ENCODE measurements at regions of chr1 and their contacts with region 1.

Region 1: GRCh38 chr1:1511533-1512285 is at the start of gene ATAD3A:
- DNase-seq: peak; percentile 84 to 96 (median 94)
- ATAC-seq: peak; percentile 96
- H3K4me3 ChIP-seq: peak within 1 kb of the TSS; percentile 98
- H3K4me3 Mint-ChIP-seq: peak within 1 kb of the TSS; percentile 82 to 94 (median 90)
- H3K27ac ChIP-seq: peak within 1 kb of the TSS; percentile 85
- H3K27ac Mint-ChIP-seq: peak within 1 kb of the TSS; percentile 81 to 96 (median 92)
- H3K4me1 ChIP-seq: peaks cover 4 to 5% of the 10 kb centered on the region in 2 donors
- H3K4me1 Mint-ChIP-seq: peaks cover 6 to 21% (median 14%) of the 10 kb centered on the region in 7 donors
- H3K27me3 ChIP-seq: no peaks in the 10 kb centered on the region
- H3K27me3 Mint-ChIP-seq: no peaks in the 10 kb centered on the region
- total RNA-seq, gene ATAD3A: 21.0 to 41.3 (median 22.9) TPM

Region 2: GRCh38 chr1:1406817-1407635 is 104.7 kb before region 1 on chr1 and contains the start of gene MRPL20:
- CTCF ChIA-PET with region 1: no interaction called
- POLR2A ChIA-PET with region 1: no interaction called
- intact Hi-C with region 1: loop called (anchors 1 to 2 kb)
- DNase-seq: peak; percentile 88 to 96 (median 94)
- ATAC-seq: peak; percentile 97
- H3K4me3 ChIP-seq: peak within 1 kb of the TSS; percentile 89
- H3K4me3 Mint-ChIP-seq: peak within 1 kb of the TSS; percentile 83 to 96 (median 93)
- H3K27ac ChIP-seq: peak within 1 kb of the TSS; percentile 89
- H3K27ac Mint-ChIP-seq: peak within 1 kb of the TSS; percentile 90 to 97 (median 94)
- H3K4me1 ChIP-seq: peaks cover 19 to 20% of the 10 kb centered on the region in 2 donors
- H3K4me1 Mint-ChIP-seq: peaks cover 0 to 59% (median 35%) of the 10 kb centered on the region in 7 donors
- H3K27me3 ChIP-seq: no peaks in the 10 kb centered on the region
- H3K27me3 Mint-ChIP-seq: peaks cover 0 to 1% (median 0%) of the 10 kb centered on the region in 5 donors
- total RNA-seq, gene MRPL20: 91.2 to 135 (median 122) TPM

Region 3: DNA sequence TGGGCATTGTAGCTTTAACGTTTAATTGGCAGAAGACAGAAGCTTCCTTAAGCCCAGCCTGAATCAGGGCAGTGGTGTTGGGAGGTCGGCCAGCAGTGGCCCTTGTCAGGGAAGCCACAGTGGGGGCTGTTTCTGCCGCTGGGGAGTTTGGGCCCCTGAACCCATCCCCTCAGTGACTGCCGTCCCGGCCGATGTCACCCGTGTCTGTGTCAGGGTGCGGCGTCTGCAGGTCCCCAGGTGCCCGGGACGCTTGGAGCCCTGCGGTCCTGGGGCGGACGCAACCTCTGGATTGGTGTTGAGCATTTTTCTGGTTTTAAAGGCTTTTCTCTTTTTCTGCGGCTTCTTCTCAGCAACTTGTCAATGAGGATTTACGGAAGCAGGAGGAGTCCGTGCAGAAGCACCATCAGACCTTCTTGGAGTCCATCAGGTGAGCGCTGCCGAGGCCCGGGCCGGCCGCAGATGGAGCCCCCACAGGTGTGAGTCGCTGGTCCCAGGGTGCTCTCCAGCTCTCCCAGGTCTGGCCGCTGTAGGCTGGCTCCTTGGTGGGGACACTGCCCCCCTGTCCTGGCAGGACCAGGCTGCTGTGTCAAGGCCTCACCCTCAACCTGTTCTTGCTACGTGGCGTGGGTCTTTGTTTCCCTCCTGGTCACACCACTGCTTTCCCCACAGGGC is 59.9 kb before region 1 on chr1:
- CTCF ChIA-PET with region 1: no interaction called
- POLR2A ChIA-PET with region 1: no interaction called
- intact Hi-C with region 1: no loop called
- DNase-seq: no peak
- ATAC-seq: no peak
- H3K4me3 ChIP-seq: no peak overlapping the region
- H3K4me3 Mint-ChIP-seq: no peak overlapping the region
- H3K27ac ChIP-seq: no peak overlapping the region
- H3K27ac Mint-ChIP-seq: no peak overlapping the region
- H3K4me1 ChIP-seq: no peaks in the 10 kb centered on the region
- H3K4me1 Mint-ChIP-seq: no peaks in the 10 kb centered on the region
- H3K27me3 ChIP-seq: no peaks in the 10 kb centered on the region
- H3K27me3 Mint-ChIP-seq: peaks cover 0 to 6% (median 0%) of the 10 kb centered on the region in 5 donors

Region 4: DNA sequence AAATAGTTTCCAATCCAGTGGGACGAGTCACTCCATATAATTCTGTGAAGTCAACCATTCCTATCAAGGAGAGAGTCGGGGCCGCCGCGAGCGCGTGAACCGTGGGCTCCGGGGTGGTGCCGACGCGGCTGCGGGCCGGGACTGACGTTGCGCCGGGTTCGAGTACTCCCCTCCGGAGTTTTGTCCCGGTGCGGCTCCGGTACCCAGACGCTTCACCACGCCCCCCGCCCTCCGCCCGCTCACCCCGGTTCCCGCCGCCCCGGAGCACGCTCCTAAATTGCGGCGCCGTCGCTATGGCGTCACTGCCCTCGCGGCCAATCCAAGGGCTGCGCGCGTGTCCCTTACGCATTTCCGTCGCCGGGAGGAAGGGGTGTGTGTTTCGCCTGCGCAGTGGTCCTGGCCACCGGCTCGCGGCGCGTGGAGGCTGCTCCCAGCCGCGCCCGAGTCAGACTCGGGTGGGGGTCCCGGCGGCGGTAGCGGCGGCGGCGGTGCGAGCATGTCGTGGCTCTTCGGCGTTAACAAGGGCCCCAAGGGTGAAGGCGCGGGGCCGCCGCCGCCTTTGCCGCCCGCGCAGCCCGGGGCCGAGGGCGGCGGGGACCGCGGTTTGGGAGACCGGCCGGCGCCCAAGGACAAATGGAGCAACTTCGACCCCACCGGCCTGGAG is 40.2 kb before region 1 on chr1 and contains the start of gene ATAD3B:
- CTCF ChIA-PET with region 1: no interaction called
- POLR2A ChIA-PET with region 1: no interaction called
- intact Hi-C with region 1: loop called (anchors 1 to 2 kb)
- DNase-seq: peak; percentile 80 to 95 (median 88)
- ATAC-seq: peak; percentile 98
- H3K4me3 ChIP-seq: peak within 1 kb of the TSS; percentile 68
- H3K4me3 Mint-ChIP-seq: peak within 1 kb of the TSS; percentile 78 to 97 (median 89)
- H3K27ac ChIP-seq: peak within 1 kb of the TSS; percentile 90
- H3K27ac Mint-ChIP-seq: peak within 1 kb of the TSS; percentile 77 to 98 (median 92)
- H3K4me1 ChIP-seq: peaks cover 9 to 14% of the 10 kb centered on the region in 2 donors
- H3K4me1 Mint-ChIP-seq: peaks cover 6 to 39% (median 25%) of the 10 kb centered on the region in 7 donors
- H3K27me3 ChIP-seq: no peaks in the 10 kb centered on the region
- H3K27me3 Mint-ChIP-seq: no peaks in the 10 kb centered on the region
- total RNA-seq, gene ATAD3B: 42.5 to 53.8 (median 51.7) TPM

Region 5: DNA sequence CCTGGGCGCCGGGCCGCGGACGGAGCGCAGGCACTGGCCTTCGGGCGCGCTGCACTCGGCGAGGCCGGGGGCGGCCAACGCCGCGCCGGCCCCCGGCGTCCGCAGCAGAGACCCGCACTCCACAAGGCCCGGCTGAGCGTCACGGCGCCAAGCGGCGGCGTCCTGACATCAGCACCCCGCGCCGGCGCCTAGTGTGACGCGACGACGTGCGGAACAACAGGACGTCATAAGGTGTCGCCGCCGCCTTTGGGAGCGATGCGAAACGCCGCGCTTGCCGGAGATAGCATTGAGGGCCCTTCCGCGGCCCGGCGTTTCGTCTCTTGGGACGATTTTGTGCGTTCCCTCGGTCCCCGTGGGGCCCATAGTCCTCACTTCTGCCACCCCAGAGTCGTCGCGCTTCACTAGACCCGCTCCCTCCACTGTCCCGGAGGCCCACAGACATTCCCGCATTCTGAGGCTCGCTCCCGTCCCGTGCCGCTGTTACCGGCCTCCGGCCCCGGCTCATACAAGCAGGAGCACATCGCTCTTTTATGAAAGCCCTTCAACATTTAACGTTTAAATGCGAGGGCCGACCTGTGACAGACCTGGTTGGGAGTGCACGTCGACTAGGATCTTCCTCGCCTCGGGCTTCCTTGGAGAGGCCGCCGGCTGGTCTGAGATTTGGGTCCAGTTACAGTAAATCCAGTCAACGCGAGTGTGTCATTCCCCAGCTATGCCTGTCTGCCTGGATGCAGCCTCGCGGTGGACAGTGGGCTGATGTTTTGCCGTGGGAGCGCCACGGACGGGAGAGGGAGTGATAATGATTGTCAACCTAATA is 63.2 kb after region 1 on chr1 and contains the start of gene SSU72:
- CTCF ChIA-PET with region 1: no interaction called
- POLR2A ChIA-PET with region 1: no interaction called
- intact Hi-C with region 1: loop called (anchors 1 to 2 kb)
- DNase-seq: peak; percentile 90 to 97 (median 93)
- ATAC-seq: peak; percentile 94
- H3K4me3 ChIP-seq: peak within 1 kb of the TSS; percentile 93
- H3K4me3 Mint-ChIP-seq: peak within 1 kb of the TSS; percentile 97 to 99 (median 98)
- H3K27ac ChIP-seq: peak within 1 kb of the TSS; percentile 98
- H3K27ac Mint-ChIP-seq: peak within 1 kb of the TSS; percentile 98 to 100 (median 99)
- H3K4me1 ChIP-seq: peaks cover 22 to 26% of the 10 kb centered on the region in 2 donors
- H3K4me1 Mint-ChIP-seq: peaks cover 21 to 42% (median 31%) of the 10 kb centered on the region in 7 donors
- H3K27me3 ChIP-seq: no peaks in the 10 kb centered on the region
- H3K27me3 Mint-ChIP-seq: peaks cover 0 to 2% (median 0%) of the 10 kb centered on the region in 5 donors
- total RNA-seq, gene SSU72: 121 to 148 (median 137) TPM

Region 6: GRCh38 chr1:1630271-1630964 is 118.7 kb after region 1 on chr1:
- CTCF ChIA-PET with region 1: no interaction called
- POLR2A ChIA-PET with region 1: no interaction called
- intact Hi-C with region 1: loop called in 1 of 2 experiments (anchors 2 kb)
- DNase-seq: peak; percentile 90 to 97 (median 96)
- ATAC-seq: peak; percentile 76
- H3K4me3 ChIP-seq: peak overlapping the region; percentile 17
- H3K4me3 Mint-ChIP-seq: peak overlapping the region; percentile 85 to 95 (median 90)
- H3K27ac ChIP-seq: peak overlapping the region; percentile 68
- H3K27ac Mint-ChIP-seq: peak overlapping the region; percentile 83 to 98 (median 95)
- H3K4me1 ChIP-seq: peaks cover 0 to 4% of the 10 kb centered on the region in 2 donors
- H3K4me1 Mint-ChIP-seq: peaks cover 0 to 11% (median 4%) of the 10 kb centered on the region in 7 donors
- H3K27me3 ChIP-seq: no peaks in the 10 kb centered on the region
- H3K27me3 Mint-ChIP-seq: peaks cover 0 to 5% (median 0%) of the 10 kb centered on the region in 5 donors

Measured in naive thymus-derived CD4-positive, alpha-beta T cell (primary cell).